Motor neuron (in vitro differentiated cells): ENCODE measurements at regions of chr16 and their contacts with region 1.

Region 1: GRCh38 chr16:77236063-77236511 is 36.9 kb downstream of the SYCE1L start:
- ATAC-seq: peak; percentile 85 to 99 (median 98)
- H3K4me3 ChIP-seq: no peak overlapping the region
- H3K27ac ChIP-seq: no peak overlapping the region
- H3K4me1 ChIP-seq: peaks cover 2% of the 10 kb centered on the region in 2 donors

Region 2: GRCh38 chr16:77584205-77584859 is 348.2 kb after region 1 on chr16:
- in situ Hi-C with region 1: loop called (anchors 5 to 25 kb)
- ATAC-seq: peak in 7 of 8 experiments; percentile 30 to 79 (median 48)
- H3K4me3 ChIP-seq: no peak overlapping the region
- H3K27ac ChIP-seq: no peak overlapping the region
- H3K4me1 ChIP-seq: peaks cover 0 to 3% of the 10 kb centered on the region in 2 donors

Region 3: DNA sequence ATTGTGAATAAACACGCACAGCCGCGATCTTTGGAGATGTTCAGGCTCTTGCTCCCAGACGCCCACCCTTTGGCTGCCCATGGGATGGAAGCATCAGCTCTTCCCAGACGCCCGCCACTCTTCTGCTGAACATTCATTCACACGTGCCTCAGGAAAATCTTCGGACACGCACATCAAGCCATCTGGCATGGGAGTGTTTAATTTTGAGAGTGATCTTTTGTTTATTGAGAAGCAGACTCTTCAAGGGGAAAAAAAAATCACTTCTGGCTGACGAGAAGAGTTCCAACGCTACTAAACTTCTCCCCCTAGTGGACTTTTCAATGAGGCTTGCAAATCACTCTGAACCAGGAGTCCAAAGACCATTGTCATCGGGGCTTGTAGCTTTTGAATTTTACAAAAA is 424.2 kb after region 1 on chr16:
- in situ Hi-C with region 1: loop called in 1 of 9 experiments (anchors 10 kb)
- ATAC-seq: peak in 7 of 8 experiments; percentile 33 to 87 (median 50)
- H3K4me3 ChIP-seq: no peak overlapping the region
- H3K27ac ChIP-seq: no peak overlapping the region
- H3K4me1 ChIP-seq: peaks cover 0 to 2% of the 10 kb centered on the region in 2 donors

Region 4: GRCh38 chr16:77993111-77993985 is 757.3 kb after region 1 on chr16:
- in situ Hi-C with region 1: loop called in 2 of 9 experiments (anchors 25 kb)
- ATAC-seq: peak in 5 of 8 experiments; percentile 25 to 89 (median 49)
- H3K4me3 ChIP-seq: no peak overlapping the region
- H3K27ac ChIP-seq: no peak overlapping the region
- H3K4me1 ChIP-seq: peaks cover 2 to 7% of the 10 kb centered on the region in 2 donors

Region 5: DNA sequence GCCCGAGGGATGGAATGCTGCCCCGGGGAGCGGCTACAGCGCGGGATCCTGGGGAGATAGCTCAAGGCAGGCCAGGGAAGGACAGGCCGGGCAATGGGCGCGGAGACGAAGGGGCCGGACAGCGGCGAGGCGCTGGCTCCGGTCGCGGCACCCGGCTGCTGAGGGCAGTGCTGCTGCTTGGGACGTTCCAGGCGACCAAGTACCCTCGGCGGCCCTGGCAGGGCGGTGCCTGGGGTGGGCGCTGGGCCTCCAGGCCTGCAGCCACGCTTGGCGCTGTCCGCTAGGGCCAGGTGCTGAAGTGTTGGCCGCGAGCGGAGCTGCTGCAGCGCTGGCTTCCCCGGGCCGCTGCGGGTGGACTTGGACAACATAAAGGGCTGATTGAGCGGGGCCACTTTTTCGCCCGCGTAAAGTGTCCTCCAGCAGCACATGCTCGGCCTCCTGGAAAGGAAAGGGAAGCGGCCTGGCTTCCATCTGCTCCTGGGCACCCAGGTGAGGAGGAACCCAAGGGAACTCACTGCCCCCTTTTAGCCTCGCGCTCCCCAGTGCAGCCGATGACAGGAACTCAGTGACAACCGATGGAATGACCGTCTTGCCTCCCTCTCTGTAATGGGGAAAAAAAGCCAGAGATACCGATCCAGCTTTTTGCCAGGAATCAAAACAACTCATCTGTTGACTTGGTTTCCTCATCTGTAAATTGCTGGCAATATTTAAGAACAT is 809.9 kb after region 1 on chr16:
- in situ Hi-C with region 1: loop called in 1 of 9 experiments (anchors 25 kb)
- ATAC-seq: peak; percentile 91 to 100 (median 96)
- H3K4me3 ChIP-seq: peak overlapping the region in 1 of 5 donors; percentile 7
- H3K27ac ChIP-seq: no peak overlapping the region
- H3K4me1 ChIP-seq: peaks cover 6 to 10% of the 10 kb centered on the region in 2 donors

Region 6: GRCh38 chr16:78099372-78100161 is 863.5 kb after region 1 on chr16 and contains the start of gene WWOX:
- in situ Hi-C with region 1: loop called in 2 of 9 experiments (anchors 25 kb)
- ATAC-seq: peak; percentile 95 to 96 (median 96)
- H3K4me3 ChIP-seq: peak within 1 kb of the TSS; percentile 54 to 78 (median 67)
- H3K27ac ChIP-seq: peak within 1 kb of the TSS; percentile 10 to 18
- H3K4me1 ChIP-seq: no peaks in the 10 kb centered on the region
- total RNA-seq, gene WWOX: 10.3 to 27.8 (median 12.3) TPM